Naive thymus-derived CD4-positive, alpha-beta T cell (primary cell): ENCODE measurements at regions of chr12 and their contacts with region 1.

Region 1: DNA sequence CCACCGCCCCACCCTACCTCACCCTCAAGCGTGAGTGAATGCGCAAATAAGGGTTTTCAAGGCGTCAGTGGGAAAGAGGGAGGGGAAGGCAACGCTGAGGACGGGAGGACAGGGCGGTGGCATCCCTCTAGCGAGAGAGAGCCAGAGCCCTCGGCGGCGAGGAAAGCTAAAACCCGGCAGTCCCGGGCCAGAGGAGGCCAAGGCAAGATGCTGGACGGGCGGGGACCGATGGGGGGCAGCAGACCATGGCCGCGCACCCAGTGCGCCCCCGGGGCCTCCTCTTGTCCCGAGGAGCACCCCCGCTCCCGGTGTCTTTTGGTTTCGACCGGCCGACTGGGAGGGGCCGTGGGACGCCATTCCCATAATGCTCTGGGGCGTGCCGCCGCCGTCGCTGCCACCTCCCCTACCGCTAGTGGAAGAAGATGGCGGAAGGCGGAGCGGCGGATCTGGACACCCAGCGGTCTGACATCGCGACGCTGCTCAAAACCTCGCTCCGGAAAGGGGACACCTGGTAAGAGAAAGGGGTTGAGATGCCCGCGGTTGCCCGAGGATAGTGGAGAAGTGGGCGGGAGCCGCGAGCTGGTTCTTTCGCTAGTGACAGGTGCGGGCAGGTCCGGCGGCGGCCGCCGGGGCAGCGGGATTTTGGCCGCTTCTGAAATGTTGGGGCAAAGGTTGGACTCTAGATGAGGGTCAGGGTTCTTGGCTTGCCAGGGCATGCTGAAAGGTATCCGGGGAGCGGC is at the start of gene USP15:
- DNase-seq: peak; percentile 92 to 96 (median 96)
- ATAC-seq: peak; percentile 91
- H3K4me3 ChIP-seq: peak within 1 kb of the TSS; percentile 96
- H3K4me3 Mint-ChIP-seq: peak within 1 kb of the TSS; percentile 90 to 100 (median 96)
- H3K27ac ChIP-seq: peak within 1 kb of the TSS; percentile 98
- H3K27ac Mint-ChIP-seq: peak within 1 kb of the TSS; percentile 97 to 99 (median 98)
- H3K4me1 ChIP-seq: peaks cover 46 to 49% of the 10 kb centered on the region in 2 donors
- H3K4me1 Mint-ChIP-seq: peaks cover 28 to 69% (median 62%) of the 10 kb centered on the region in 7 donors
- H3K27me3 ChIP-seq: no peaks in the 10 kb centered on the region
- H3K27me3 Mint-ChIP-seq: peaks cover 0 to 3% (median 0%) of the 10 kb centered on the region in 5 donors
- total RNA-seq, gene USP15: 156 to 224 (median 180) TPM

Region 2: DNA sequence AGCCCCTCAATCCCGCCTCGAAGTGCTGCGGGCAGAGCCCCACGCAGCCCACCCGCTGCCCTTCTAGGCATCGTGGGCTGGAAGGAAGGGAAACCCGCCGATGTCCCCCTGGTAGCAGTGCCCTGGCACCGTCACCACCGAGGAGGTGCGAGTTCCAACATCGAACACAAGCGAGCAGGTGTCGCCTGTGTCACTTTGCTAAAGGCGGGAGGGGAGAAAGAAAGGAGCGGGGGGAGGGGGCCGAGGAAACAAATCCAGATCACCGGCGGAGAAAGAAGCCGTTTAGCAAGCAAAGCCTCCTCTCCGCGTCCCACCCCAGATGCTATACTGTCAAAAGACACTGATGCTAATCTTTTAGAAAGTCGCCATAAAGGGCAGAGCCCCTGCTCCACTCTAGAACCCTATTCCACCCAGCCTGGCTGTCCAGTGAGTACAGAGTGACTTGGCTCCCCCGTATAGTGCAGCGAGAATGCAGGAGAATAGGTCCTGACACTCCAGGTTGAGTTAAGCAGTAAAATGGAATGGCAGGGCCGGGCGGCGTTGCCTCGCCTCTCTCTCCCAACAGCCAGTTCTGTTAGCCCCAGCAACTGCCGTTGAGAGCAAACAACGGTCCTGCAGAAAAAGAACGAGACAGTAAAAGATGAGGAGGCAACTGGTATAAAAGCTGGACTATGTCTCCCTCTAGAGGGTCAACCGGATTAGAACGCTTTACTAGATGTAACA is 67.8 kb before region 1 on chr12:
- CTCF ChIA-PET with region 1: no interaction called
- POLR2A ChIA-PET with region 1: no interaction called
- intact Hi-C with region 1: loop called in 1 of 2 experiments (anchors 2 kb)
- DNase-seq: peak; percentile 14 to 85 (median 72)
- ATAC-seq: peak; percentile 92
- H3K4me3 ChIP-seq: peak overlapping the region; percentile 40
- H3K4me3 Mint-ChIP-seq: peak overlapping the region; percentile 84 to 95 (median 90)
- H3K27ac ChIP-seq: no peak overlapping the region
- H3K27ac Mint-ChIP-seq: peak overlapping the region in 2 of 9 donors; percentile 9 to 63
- H3K4me1 ChIP-seq: peaks cover 22 to 23% of the 10 kb centered on the region in 2 donors
- H3K4me1 Mint-ChIP-seq: peaks cover 8 to 27% (median 24%) of the 10 kb centered on the region in 7 donors
- H3K27me3 ChIP-seq: peaks cover 12 to 19% of the 10 kb centered on the region in 2 donors
- H3K27me3 Mint-ChIP-seq: peaks cover 25 to 80% (median 39%) of the 10 kb centered on the region in 5 donors

Region 3: GRCh38 chr12:62319058-62319457 is 58.9 kb after region 1 on chr12:
- CTCF ChIA-PET with region 1: no interaction called
- POLR2A ChIA-PET with region 1: no interaction called
- intact Hi-C with region 1: loop called in 1 of 2 experiments (anchors 10 kb)
- DNase-seq: no peak
- ATAC-seq: peak; percentile 65
- H3K4me3 ChIP-seq: no peak overlapping the region
- H3K4me3 Mint-ChIP-seq: peak overlapping the region in 2 of 10 donors; percentile 2 to 15
- H3K27ac ChIP-seq: no peak overlapping the region
- H3K27ac Mint-ChIP-seq: peak overlapping the region in 6 of 9 donors; percentile 1 to 74 (median 51)
- H3K4me1 ChIP-seq: no peaks in the 10 kb centered on the region
- H3K4me1 Mint-ChIP-seq: peaks cover 27 to 59% (median 57%) of the 10 kb centered on the region in 7 donors
- H3K27me3 ChIP-seq: no peaks in the 10 kb centered on the region
- H3K27me3 Mint-ChIP-seq: no peaks in the 10 kb centered on the region

Region 4: GRCh38 chr12:62466594-62467491 is 206.7 kb after region 1 on chr12 and contains the start of gene MON2:
- CTCF ChIA-PET with region 1: no interaction called
- POLR2A ChIA-PET with region 1: no interaction called
- intact Hi-C with region 1: loop called (anchors 1 kb)
- DNase-seq: peak; percentile 79 to 89 (median 84)
- ATAC-seq: peak; percentile 98
- H3K4me3 ChIP-seq: peak within 1 kb of the TSS; percentile 90
- H3K4me3 Mint-ChIP-seq: peak within 1 kb of the TSS; percentile 85 to 99 (median 94)
- H3K27ac ChIP-seq: peak within 1 kb of the TSS; percentile 88
- H3K27ac Mint-ChIP-seq: peak within 1 kb of the TSS; percentile 86 to 98 (median 96)
- H3K4me1 ChIP-seq: peaks cover 8 to 17% of the 10 kb centered on the region in 2 donors
- H3K4me1 Mint-ChIP-seq: peaks cover 12 to 30% (median 21%) of the 10 kb centered on the region in 7 donors
- H3K27me3 ChIP-seq: peaks cover 0 to 4% of the 10 kb centered on the region in 2 donors
- H3K27me3 Mint-ChIP-seq: peaks cover 0 to 4% (median 3%) of the 10 kb centered on the region in 5 donors
- total RNA-seq, gene MON2: 50.0 to 96.3 (median 76.0) TPM

Region 5: DNA sequence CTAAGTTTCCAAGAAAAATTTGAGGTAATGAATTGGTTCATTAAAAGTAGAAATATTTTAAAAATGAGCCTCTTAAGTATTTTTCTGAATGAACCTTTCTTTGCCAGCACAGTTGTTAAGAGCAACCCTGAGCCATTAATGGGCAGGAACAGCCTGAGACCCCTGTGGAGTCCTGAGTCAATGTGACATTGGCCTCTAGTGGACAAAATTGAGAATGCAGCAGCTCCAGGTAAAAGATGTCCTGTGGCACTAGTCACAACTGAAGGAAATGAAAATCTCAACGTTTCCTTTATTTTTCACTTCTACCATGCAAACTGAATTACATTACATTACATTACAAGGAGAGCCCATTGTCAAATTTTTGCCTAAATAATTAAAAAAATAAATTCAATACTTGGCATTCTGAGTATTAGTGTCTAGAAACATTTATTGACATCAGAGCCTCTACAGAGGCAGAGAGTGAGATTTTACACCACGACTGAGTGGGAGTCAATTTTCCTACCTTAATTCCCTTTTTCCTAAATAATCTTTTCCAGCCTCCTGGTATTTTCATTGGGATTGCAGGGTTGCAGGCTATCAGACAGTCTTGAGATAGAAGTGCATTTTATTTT is 539.1 kb after region 1 on chr12:
- CTCF ChIA-PET with region 1: no interaction called
- POLR2A ChIA-PET with region 1: no interaction called
- intact Hi-C with region 1: loop called (anchors 5 to 10 kb)
- DNase-seq: peak in 8 of 9 donors; percentile 5 to 53 (median 40)
- ATAC-seq: peak; percentile 81
- H3K4me3 ChIP-seq: no peak overlapping the region
- H3K4me3 Mint-ChIP-seq: no peak overlapping the region
- H3K27ac ChIP-seq: no peak overlapping the region
- H3K27ac Mint-ChIP-seq: no peak overlapping the region
- H3K4me1 ChIP-seq: no peaks in the 10 kb centered on the region
- H3K4me1 Mint-ChIP-seq: no peaks in the 10 kb centered on the region
- H3K27me3 ChIP-seq: no peaks in the 10 kb centered on the region
- H3K27me3 Mint-ChIP-seq: peaks cover 0 to 14% (median 0%) of the 10 kb centered on the region in 5 donors